ENCODE measurements at regions of chr2 and their contacts with region 1.

Region 1: DNA sequence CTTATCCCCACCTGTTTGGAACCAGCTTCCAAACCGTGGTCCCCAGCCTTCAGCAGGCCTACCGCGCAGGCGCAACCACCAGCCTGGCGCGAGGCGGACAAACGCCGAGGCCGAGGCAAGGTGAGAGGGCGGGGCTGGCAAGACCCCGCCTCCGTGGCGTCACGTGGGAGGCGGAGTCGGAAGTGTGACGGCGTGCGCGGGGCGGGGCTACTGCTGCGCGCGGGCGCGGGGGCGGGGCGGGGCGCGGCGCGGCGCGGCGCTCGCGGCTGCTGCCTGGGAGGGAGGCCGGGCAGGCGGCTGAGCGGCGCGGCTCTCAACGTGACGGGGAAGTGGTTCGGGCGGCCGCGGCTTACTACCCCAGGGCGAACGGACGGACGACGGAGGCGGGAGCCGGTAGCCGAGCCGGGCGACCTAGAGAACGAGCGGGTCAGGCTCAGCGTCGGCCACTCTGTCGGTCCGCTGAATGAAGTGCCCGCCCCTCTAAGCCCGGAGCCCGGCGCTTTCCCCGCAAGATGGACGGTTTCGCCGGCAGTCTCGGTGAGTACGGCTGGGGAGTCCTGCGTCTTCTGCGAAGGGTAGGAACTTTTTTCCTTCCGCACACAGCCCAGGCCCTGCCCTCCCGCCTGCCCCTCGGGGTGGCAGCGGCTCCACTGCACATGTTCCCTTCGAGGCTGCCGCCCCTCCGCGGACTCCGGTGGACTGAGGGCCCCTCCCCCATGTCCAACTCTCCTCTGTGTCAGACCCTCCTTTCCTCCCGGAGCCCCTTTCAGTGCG is at the start of gene EML4:
- DNase-seq: peak; percentile 97
- total RNA-seq, gene EML4: 33.9 to 36.6 TPM

Region 2: DNA sequence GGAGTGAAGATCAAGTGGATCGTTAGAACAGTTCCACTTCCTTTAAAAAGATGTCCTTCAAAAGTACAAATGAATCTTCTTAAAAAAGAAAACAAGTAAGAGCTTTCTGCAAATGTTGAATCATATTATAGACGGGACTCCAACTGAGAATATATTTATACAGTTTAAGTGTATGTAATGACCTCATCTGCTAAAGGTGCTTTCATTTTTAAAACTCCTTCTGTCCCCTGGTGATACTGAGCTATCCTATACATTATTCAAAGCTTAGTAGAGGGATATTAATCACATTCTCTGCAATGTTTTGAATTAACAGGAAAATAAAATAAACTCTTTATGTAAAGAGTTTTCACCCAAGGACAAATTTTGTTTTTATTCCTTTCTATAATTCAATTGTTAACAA is 1296.7 kb before region 1 on chr2:
- intact Hi-C with region 1: no loop called
- DNase-seq: no peak

Region 3: GRCh38 chr2:42132966-42133641 is 36.2 kb before region 1 on chr2:
- intact Hi-C with region 1: loop called in 1 of 2 experiments (anchors 5 kb)
- DNase-seq: peak; percentile 95

Region 4: GRCh38 chr2:43300840-43301583 is 1131.7 kb after region 1 on chr2:
- intact Hi-C with region 1: no loop called
- DNase-seq: no peak